Breast epithelium (tissue), 4 donors: ENCODE measurements at regions of chr2 and their contacts with region 1.

Region 1: DNA sequence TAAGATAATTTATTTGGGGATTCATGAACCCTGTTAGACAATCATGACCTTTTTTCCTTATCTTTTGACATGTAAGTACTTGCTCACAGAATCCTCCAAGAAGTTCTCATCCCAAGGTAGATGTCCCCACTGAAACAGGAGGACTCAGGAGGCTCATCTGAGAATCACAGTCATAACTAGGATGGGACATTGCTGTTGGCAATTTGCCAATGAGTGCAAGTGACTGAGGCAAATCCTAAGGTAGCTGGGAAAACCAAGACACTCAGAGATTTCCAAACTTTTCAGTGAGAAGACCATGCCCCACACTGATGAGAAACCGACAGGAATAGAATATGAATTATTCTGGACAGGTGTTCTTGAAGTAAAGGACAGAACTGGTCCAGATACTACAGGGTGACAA is 735.0 kb downstream of the TMEM182 start:
- DNase-seq: no peak
- H3K4me3 ChIP-seq: no peak overlapping the region
- H3K27ac ChIP-seq: no peak overlapping the region
- H3K4me1 ChIP-seq: no peaks in the 10 kb centered on the region
- H3K27me3 ChIP-seq: no peaks in the 10 kb centered on the region
- CTCF ChIP-seq: no peak
- POLR2A ChIP-seq: no peak

Region 2: DNA sequence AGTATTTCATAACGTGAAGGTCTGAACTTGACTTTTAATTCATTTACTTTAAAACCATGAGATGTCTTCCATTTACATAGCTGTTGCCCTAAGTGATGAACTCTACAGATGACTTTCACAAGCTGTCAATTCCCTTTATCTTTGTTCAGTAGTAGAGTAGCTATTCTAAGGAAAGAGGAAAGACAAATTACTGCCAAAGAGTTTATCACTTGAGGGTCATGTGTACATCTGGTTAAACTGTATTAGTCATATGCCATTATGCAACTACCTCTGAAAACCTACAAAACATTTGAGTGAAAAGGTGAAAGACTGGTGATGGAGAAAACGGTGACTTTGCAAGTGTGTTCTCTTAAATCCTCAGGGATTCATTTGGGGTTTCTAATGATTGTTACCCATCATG is 28.9 kb after region 1 on chr2:
- intact Hi-C with region 1: loop called (anchors 1 kb)
- DNase-seq: no peak
- H3K4me3 ChIP-seq: no peak overlapping the region
- H3K27ac ChIP-seq: no peak overlapping the region
- H3K4me1 ChIP-seq: no peaks in the 10 kb centered on the region
- H3K27me3 ChIP-seq: no peaks in the 10 kb centered on the region
- CTCF ChIP-seq: no peak
- POLR2A ChIP-seq: no peak